ENCODE measurements at regions of chr12 and their contacts with region 1.

Region 1: GRCh38 chr12:70733385-70733784 is 96.2 kb upstream of the PTPRB start:
- DNase-seq: peak; percentile 64

Region 2: DNA sequence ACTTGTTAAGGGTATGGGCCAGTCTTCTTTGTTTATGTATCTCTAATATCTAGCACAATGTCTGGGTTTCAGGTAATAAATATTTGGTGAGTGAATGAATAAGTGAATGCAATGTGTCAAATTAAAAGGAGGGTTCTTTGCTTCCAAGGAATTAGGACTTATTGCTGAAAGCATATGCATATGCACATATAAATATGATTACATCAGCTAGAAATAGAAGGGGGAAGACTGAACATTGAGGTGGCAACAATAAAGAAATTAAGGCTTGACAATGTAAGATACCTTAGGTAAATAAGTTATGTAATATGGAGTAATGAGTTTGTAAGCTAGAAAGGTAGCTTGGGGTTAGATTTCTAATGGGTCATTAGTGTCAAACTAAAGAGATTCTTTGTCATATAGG is 329.6 kb before region 1 on chr12:
- CTCF ChIA-PET with region 1: interaction called, 11 read pairs
- POLR2A ChIA-PET with region 1: no interaction called
- DNase-seq: no peak

Region 3: DNA sequence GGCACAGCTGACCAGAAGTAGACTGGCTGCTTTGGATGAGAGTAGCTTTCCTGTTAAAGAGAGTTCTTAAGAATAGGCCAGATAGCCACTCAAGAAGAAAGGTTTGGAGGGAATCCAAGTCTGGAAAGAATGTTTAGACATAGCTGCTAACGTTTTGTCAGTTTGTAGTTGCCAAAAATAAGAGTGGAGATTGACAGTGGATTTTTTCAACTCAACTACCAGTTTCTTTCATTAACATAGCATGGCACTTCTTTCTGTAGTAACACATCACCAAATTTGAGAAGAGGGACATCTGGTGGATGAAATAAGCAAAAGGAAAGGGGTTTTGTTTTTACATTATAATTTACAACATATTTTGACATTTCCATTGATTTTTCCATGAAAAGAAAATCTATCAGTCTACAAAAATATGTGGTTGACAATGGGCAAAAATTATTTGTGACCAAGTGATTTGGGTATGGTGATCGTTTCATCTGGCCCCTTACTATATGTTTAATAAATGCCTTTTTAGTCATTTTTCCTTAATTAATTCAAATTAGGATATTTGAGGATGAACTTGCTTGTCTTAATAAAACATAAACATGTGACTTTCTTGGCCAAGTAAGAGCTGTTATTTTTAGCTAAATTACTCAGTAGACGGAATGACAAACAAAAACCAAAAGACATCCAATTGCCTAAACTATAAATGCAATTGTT is 116.0 kb after region 1 on chr12:
- CTCF ChIA-PET with region 1: interaction called, 12 read pairs
- POLR2A ChIA-PET with region 1: no interaction called
- DNase-seq: peak; percentile 35